Right ventricle myocardium inferior (tissue), 1 donor: ENCODE measurements at regions of chr13 and their contacts with region 1.

Region 1: GRCh38 chr13:39415008-39415802 is 187.8 kb downstream of the LHFPL6 start:
- DNase-seq: no peak
- ATAC-seq: peak; percentile 70

Region 2: DNA sequence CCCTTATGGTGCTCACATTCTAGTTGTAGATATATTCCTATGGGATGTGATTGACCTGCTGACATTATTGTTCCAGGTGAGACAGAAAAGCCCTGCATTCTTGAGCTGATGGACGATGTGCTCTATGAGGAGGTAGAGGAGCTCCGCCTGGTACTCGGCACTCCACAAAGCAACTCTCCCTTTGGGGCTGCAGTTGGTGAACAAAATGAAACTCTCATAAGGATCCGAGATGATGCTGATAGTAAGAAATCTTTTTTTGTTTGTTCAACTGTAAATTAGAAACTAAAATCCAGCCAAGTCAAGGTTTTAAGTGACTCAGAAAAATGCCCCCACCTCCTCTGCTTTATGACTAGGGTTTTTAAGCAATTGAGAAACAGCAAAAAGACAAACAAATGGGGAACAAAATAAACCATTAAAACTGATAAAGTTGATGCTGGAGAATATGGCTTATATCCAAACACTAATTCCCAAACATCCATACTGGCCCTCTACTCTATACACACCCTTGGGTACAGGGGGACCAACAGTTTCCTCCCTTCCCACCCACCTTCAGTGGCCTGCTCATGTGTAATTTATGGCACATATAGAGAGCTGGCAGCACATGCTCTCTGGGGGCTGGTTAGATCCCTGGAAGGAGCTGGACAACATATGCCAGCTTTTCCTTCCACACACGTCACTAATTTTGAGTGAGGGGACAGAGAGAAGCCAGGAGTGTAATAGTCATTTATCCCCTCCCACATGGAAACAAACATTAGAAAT is 564.2 kb before region 1 on chr13:
- intact Hi-C with region 1: no loop called
- DNase-seq: no peak
- ATAC-seq: no peak

Region 3: DNA sequence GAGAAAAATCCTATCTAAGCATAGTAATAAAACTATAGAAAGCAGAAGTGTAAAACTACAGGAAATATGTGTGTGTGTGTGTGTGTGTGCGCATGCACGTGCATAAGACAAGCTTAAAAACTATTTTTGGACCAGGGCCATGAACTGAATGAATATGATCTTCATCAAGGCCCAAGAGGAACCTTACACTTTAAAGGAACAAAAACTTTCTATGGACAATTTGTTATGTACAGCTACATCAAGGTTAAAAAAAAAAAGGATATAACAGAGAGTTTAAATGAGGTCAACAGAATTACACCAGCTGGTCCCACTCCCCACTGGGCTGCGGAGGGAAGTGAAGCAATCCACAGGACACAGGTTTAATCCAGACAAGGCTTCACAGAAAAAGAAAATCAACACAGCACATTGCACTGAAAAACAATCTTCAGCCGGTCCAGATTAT is 36.7 kb after region 1 on chr13:
- intact Hi-C with region 1: loop called (anchors 2 kb)
- DNase-seq: peak; percentile 71
- ATAC-seq: peak; percentile 86